ENCODE measurements at regions of chr5 and their contacts with region 1.

Region 1: DNA sequence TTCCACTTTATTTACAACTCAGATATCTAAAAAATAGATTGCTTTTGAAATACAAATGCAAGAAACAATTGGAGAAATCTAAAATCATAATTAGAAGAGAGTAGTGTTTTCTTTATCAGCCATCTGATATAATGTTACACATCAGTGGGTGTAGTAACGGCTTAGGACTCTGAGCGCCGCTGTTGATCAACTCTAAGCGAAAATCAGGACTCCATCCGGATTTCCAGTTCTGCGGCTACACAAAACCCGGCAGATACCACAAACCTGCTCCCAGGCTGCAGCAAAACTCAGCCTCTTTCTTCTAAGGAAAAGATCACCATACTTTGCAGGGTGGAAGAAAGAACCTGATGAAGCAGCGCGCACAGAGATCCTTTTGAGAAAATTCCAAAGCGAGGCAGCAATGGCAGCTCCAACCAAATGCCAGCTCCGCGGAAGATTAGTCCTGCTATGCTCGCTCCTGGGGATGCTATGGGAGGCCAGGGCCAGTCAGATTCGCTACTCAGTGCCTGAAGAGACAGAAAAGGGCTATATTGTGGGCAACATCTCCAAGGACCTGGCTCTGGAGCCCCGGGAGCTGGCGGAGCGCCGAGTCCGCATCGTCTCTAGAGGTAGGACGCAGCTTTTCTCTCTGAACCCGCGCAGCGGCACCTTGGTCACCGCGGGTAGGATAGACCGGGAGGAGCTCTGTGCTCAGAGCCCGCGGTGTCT is at the start of gene PCDHGA9:
- DNase-seq: no peak
- total RNA-seq, gene PCDHGA9: 9.6 TPM

Region 2: GRCh38 chr5:141338538-141339306 is 64.0 kb before region 1 on chr5 and contains the start of gene PCDHGA2:
- intact Hi-C with region 1: no loop called
- DNase-seq: no peak
- total RNA-seq, gene PCDHGA2: 17.3 TPM

Region 3: GRCh38 chr5:141359790-141360426 is 42.8 kb before region 1 on chr5 and contains the start of gene PCDHGB2:
- intact Hi-C with region 1: loop called (anchors 5 kb)
- DNase-seq: peak; percentile 49
- total RNA-seq, gene PCDHGB2: 16.2 TPM

Measured in cardiac septum (tissue), 1 donor.